Activated CD4-positive, alpha-beta T cell treated with anti-CD3 and anti-CD28 coated beads for 36 hours (primary cell): ENCODE measurements at regions of chr2 and their contacts with region 1.

Region 1: DNA sequence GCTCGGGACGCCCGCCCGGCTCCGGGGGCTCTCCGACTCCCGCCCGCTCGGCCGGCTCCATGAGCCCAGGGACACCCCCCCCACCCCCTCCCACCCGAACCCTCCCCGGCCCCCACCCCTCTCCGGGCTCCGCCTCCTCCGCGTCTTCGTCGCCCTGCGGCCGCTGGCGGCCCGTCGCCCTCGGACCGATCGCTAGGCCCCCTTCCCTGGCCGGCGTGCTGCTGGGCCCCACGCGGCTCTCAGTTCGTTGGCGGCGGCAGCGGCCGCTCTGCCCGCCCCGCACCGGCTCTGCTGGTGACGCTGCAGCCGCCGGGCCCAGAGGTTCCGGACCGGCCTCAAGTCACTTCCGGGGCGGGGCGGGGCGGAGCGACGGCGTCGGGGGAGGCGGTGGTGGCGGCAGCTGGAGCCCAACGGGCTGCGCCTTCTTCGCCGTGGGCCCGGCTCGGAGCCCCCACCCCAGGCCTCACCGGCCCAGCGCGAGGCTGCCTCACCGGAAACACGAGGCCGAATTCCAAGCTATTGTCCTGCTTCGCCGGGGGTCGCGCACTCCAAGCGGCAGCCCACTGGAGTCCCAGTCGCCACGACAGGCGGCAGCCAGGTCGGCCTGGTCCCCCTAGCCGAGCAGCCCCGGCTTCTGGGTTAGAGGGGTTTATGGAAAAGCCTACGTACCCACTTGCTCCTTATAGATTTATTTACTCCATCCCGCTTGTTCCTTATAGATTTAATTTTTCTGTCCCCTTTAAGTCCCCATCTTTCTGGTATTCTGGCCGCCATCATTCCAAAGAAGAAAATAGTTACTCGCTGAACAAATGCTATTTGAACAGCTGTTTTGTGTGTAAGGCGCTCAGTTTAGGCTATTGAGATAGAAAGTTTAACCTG is at the start of gene PSME4:
- DNase-seq: peak; percentile 96
- ATAC-seq: peak; percentile 86
- H3K4me3 Mint-ChIP-seq: peak within 1 kb of the TSS; percentile 84
- H3K27ac Mint-ChIP-seq: peak within 1 kb of the TSS; percentile 97
- H3K4me1 Mint-ChIP-seq: peaks cover 35% of the 10 kb centered on the region
- H3K27me3 Mint-ChIP-seq: no peaks in the 10 kb centered on the region
- total RNA-seq, gene PSME4: 37.8 to 44.3 TPM

Region 2: GRCh38 chr2:53786705-53787612 is 184.0 kb before region 1 on chr2 and contains the starts of genes ASB3 and ERLEC1:
- CTCF ChIA-PET with region 1: no interaction called
- POLR2A ChIA-PET with region 1: no interaction called
- intact Hi-C with region 1: loop called in 1 of 2 experiments (anchors 1 kb)
- DNase-seq: peak; percentile 93
- ATAC-seq: peak; percentile 91
- H3K4me3 Mint-ChIP-seq: peak within 1 kb of the TSS; percentile 100
- H3K27ac Mint-ChIP-seq: peak within 1 kb of the TSS; percentile 95
- H3K4me1 Mint-ChIP-seq: peaks cover 47% of the 10 kb centered on the region
- H3K27me3 Mint-ChIP-seq: no peaks in the 10 kb centered on the region
- total RNA-seq, gene ASB3: 17.3 to 23.4 TPM
- total RNA-seq, gene ERLEC1: 18.3 to 20.5 TPM

Region 3: DNA sequence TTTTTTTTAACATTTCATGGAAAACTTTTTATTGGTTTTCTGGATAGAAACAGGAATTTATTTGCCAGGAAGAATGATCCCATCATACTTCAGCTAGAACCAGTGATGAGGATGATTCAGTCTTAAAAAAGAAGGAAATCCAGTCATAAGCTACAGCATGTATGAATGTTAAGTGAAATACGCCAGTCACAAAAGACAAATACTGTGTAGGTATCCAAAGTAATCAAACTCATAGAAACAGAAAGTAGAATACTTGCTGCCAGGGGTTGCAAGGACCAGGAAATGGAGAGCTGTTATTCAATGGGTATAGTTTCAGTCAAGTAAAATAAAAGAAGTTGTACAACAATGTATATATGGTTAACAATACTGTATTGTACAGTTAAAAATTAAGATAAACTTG is 21.5 kb before region 1 on chr2:
- CTCF ChIA-PET with region 1: no interaction called
- POLR2A ChIA-PET with region 1: no interaction called
- intact Hi-C with region 1: no loop called
- DNase-seq: no peak
- ATAC-seq: peak; percentile 78
- H3K4me3 Mint-ChIP-seq: no peak overlapping the region
- H3K27ac Mint-ChIP-seq: no peak overlapping the region
- H3K4me1 Mint-ChIP-seq: peaks cover 21% of the 10 kb centered on the region
- H3K27me3 Mint-ChIP-seq: no peaks in the 10 kb centered on the region

Region 4: DNA sequence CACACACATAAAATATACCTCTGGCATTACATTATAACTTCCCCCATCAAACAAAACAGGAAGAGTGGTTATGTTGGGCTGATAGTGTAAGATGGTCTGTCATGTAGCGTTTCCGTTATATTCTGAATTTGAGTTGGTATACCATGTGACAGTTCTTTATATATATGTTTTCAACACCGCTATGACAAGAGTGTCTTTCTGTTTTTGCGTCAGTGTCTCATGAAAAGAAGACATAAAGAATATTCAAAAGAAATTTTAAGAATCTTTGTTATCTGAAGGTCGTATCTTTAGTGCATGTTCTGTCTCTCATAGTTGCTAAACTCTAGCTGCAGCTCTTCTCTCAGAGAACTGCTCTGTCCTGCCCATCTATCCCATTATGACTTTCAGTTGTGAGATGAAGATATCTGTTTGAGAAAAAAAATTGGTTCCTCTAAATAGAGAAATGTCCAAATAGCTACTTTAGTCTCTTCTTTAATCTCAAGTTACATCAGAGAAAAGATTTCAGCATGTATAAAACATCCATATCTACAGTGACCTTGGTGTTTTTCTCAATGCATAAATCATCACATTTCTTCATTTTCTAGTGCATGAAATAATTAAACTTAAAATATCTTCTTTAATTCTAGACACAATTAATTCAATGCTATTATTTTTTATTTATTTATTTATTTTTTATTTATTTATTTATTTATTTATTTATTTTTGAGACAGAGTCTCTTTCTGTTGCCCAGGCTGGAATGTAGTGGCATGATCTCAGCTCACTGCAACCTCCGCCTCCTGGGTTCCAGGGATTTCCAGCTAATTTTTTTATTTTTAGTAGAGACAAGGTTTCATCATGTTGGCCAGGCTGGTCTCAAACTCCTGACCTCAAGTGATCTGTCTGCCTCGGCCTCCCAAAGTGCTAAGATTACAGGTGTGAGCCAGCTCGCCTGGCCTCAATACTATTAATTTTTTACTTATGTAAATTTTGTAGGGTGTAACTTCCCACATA is 24.1 kb after region 1 on chr2:
- CTCF ChIA-PET with region 1: interaction called, 3 read pairs
- POLR2A ChIA-PET with region 1: interaction called, 3 read pairs
- intact Hi-C with region 1: loop called in 1 of 2 experiments (anchors 1 kb)
- DNase-seq: no peak
- ATAC-seq: peak; percentile 94
- H3K4me3 Mint-ChIP-seq: peak overlapping the region; percentile 24
- H3K27ac Mint-ChIP-seq: peak overlapping the region; percentile 85
- H3K4me1 Mint-ChIP-seq: peaks cover 28% of the 10 kb centered on the region
- H3K27me3 Mint-ChIP-seq: no peaks in the 10 kb centered on the region

Region 5: DNA sequence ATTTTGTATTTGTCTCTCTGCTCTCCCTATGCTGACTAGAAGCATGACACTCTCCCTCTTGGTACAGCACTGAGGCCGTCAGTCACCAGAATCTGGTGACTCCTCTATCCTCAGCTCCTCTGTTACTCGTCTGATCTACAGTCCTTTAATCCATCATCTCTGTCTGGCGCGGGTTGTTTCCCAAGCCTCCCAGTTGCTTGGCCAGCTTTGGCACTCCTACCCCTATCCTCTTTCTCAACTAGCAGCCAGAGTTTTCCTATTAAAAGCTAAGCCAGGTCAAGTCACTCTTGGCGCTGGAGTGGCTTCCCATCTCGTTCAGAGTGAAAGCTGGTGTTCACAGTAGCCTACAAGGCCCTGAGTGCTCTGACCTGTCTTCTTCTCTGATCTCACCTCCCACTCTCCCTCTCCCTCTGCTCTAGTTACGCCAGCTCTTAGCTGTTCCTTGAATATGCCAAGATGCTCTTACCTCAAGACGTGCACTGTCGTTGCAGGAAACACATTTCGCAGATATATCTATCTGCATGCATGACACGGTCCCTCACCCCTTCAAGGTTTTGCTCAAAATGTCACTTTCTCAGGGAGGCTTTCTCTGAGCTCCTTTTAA is 41.7 kb after region 1 on chr2:
- CTCF ChIA-PET with region 1: no interaction called
- POLR2A ChIA-PET with region 1: no interaction called
- intact Hi-C with region 1: no loop called
- DNase-seq: peak; percentile 11
- ATAC-seq: peak; percentile 84
- H3K4me3 Mint-ChIP-seq: no peak overlapping the region
- H3K27ac Mint-ChIP-seq: peak overlapping the region; percentile 40
- H3K4me1 Mint-ChIP-seq: peaks cover 33% of the 10 kb centered on the region
- H3K27me3 Mint-ChIP-seq: no peaks in the 10 kb centered on the region

Region 6: DNA sequence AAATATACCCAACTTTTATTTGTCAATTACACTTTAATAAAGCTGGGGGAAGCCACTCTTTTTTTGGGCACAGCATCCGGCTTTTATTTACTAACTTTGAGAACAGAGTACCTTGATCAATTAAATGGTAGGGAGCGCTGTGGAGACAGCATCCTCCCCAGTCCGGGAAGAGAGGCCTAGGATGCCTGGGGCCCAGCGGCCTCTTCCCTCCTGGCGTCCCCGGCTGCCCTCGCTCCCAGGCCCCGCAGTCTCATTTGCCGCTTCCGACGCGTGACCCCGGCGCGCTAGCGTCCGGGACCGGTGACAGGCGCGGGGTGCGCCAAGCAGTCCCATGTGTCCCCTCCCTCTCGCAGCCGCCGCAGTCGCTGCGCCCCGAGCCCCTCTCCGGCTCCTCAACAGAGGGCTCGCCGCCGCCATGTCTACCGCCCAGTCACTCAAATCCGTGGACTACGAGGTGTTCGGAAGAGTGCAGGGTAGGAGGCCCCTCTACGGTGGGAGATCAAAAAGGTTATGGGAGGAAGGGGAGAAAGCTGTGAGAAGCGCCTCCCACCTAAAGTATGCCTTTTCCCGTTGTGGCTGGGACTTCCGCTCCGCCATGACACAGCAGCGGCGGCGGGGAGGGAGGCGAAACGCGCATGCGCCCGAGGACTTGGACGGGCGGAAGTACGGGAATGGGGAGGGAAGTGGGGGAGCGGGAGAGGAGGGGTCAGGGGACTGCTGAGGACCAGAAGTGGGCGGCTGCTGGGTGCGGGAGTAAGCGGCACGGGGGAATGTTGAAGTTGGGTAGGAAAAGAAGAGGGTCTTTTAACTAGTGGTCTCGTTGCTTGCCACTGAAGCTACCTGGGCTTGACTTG is 144.5 kb after region 1 on chr2 and contains the start of gene ACYP2:
- CTCF ChIA-PET with region 1: interaction called, 4 read pairs
- POLR2A ChIA-PET with region 1: interaction called, 3 read pairs
- intact Hi-C with region 1: loop called (anchors 1 to 10 kb)
- DNase-seq: peak; percentile 95
- ATAC-seq: peak; percentile 90
- H3K4me3 Mint-ChIP-seq: peak within 1 kb of the TSS; percentile 85
- H3K27ac Mint-ChIP-seq: peak within 1 kb of the TSS; percentile 96
- H3K4me1 Mint-ChIP-seq: peaks cover 12% of the 10 kb centered on the region
- H3K27me3 Mint-ChIP-seq: peaks cover 2% of the 10 kb centered on the region
- total RNA-seq, gene ACYP2: 6.0 to 6.9 TPM

Region 7: DNA sequence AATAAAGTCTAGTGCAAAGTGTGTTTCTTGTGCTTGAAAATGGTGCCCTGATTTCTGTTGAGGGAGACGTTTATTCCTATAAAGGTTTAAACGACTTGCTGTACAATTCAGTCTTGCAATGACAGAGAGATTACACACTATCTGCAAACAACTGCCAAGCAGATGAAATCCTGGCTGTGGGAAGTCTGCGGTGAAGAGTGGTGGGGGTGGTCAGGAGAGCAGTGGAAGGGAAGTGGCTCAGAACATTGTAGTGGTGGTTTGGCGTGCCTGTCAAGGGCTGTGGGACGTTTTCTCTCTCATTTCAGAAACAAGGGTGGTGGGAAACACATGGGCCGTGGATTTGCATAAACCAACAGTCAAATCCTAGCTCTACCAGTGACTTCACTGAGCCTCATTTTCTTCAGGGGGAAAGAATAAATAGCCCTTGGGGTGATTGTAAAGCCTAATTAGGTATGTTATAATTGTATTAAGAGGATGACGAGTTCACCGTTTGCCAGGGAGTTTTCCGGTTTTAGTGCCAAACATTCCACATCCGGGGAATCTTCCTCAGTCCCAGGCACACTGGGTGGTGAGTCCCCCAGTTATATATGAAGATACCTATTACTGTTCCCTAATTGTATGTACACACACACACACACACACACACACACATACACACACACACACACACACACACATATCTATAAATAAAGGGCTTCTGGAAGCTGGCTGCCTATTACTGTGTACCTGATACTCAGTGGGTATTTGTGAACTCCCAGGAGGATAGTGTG is 600.1 kb after region 1 on chr2:
- CTCF ChIA-PET with region 1: no interaction called
- POLR2A ChIA-PET with region 1: no interaction called
- intact Hi-C with region 1: loop called in 1 of 2 experiments (anchors 5 kb)
- DNase-seq: peak; percentile 90
- ATAC-seq: peak; percentile 50
- H3K4me3 Mint-ChIP-seq: peak overlapping the region; percentile 65
- H3K27ac Mint-ChIP-seq: peak overlapping the region; percentile 99
- H3K4me1 Mint-ChIP-seq: peaks cover 90% of the 10 kb centered on the region
- H3K27me3 Mint-ChIP-seq: no peaks in the 10 kb centered on the region